Activated CD4-positive, alpha-beta T cell treated with anti-CD3 and anti-CD28 coated beads, Interleukin-2, amount 10 ng/mL, durations not matched to agents 24 days and 14 days (primary cell): ENCODE measurements at regions of chr1 and their contacts with region 1.

Region 1: GRCh38 chr1:156054500-156055280 is at the start of gene LAMTOR2:
- DNase-seq: peak; percentile 99
- H3K4me3 Mint-ChIP-seq: peak within 1 kb of the TSS; percentile 98
- H3K27ac Mint-ChIP-seq: peak within 1 kb of the TSS; percentile 89
- H3K4me1 Mint-ChIP-seq: peaks cover 30% of the 10 kb centered on the region
- H3K27me3 Mint-ChIP-seq: no peaks in the 10 kb centered on the region
- total RNA-seq, gene LAMTOR2: 69.9 and 73.0 TPM in 2 replicates

Region 2: DNA sequence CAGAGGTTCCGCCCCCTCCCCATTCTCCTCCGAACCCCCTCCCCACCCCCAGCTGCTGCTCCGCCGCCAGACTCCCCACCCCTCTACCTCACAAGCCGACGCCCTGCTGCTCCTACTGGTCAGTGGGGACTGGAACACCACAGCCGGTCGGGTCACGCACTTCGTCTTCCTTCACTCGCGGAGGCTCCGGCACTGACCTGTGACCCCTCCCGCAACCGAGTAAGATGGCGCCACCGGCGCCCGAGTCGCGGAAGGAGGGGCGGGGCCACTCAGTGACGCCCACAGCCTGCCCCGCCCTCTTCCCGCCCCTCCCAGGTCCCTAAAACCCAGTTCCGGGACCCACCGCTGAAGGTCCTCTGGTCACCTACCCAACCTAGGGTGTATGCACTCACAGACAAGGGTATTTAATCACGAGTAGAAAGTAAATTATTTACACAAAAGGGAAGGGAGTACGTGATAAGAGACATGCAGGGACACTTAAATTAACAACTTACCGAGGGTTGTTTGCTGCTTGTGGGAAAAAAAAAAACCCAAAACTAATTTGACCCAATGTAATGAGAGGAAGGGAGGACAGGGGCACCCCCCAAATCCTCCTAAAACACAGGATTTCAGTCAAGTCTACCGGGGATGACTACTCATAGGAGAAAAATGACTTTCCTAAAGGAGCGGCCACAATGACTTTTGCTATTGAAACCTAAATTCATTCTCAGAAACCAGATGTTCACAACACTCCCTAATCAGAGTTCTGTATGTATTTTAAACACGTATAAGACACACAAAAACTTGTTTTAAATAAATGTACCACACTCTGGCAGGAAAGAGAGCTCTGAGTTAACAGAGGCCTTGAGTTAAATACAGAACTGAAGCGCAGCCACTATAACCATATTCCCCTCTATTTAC is 143.3 kb before region 1 on chr1 and contains the start of gene RIT1:
- intact Hi-C with region 1: loop called (anchors 2 kb)
- DNase-seq: peak; percentile 95
- H3K4me3 Mint-ChIP-seq: peak within 1 kb of the TSS; percentile 97
- H3K27ac Mint-ChIP-seq: peak within 1 kb of the TSS; percentile 99
- H3K4me1 Mint-ChIP-seq: peaks cover 21% of the 10 kb centered on the region
- H3K27me3 Mint-ChIP-seq: no peaks in the 10 kb centered on the region
- total RNA-seq, gene RIT1: 17.9 and 21.7 TPM in 2 replicates

Region 3: GRCh38 chr1:155978325-155978972 is 76.2 kb before region 1 on chr1 and contains the start of gene ARHGEF2:
- intact Hi-C with region 1: loop called (anchors 2 kb)
- DNase-seq: peak; percentile 94
- H3K4me3 Mint-ChIP-seq: peak within 1 kb of the TSS; percentile 99
- H3K27ac Mint-ChIP-seq: peak within 1 kb of the TSS; percentile 92
- H3K4me1 Mint-ChIP-seq: peaks cover 70% of the 10 kb centered on the region
- H3K27me3 Mint-ChIP-seq: no peaks in the 10 kb centered on the region
- total RNA-seq, gene ARHGEF2: 189 and 198 TPM in 2 replicates

Region 4: DNA sequence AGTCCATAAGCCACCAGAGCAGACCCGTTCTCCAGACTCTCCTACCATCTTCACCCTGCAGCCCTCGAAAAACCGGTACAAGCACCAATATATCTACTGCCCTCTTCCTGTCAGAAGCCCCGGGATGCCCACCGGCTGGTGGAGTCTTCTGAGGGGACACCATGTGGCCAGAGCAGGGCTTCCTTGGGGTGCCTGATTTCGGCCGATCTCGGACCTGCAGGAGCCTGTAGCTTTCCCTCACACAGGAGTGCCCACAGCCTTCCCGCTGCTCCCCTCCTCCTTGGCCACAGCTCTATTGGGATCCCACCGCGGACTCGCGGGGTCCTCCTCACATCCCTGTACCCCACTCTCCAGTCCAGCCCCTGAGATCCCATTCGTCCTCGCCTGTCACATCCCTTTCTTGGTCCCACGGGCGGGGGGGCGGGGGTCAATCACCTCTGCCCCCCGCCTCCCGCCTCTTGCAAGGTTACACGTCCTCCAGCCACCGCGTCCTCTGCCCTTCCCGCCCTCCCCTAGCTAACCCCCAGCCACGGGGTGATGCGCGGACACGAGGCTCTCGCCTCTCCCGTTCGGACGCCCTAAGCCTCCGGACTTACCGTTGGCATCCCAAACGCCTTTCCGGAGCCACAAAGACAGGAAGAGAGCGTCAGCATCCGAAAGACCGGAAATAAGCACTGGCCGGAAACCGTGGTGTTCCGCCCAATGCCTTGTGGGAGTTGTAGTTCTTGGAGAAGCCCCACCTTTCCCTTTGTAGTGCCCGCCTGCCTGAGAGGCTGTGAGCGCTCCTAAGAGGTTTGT is 34.2 kb before region 1 on chr1 and contains the start of gene SSR2:
- intact Hi-C with region 1: loop called (anchors 1 kb)
- DNase-seq: peak; percentile 97
- H3K4me3 Mint-ChIP-seq: peak within 1 kb of the TSS; percentile 92
- H3K27ac Mint-ChIP-seq: peak within 1 kb of the TSS; percentile 93
- H3K4me1 Mint-ChIP-seq: peaks cover 27% of the 10 kb centered on the region
- H3K27me3 Mint-ChIP-seq: peaks cover 4% of the 10 kb centered on the region
- total RNA-seq, gene SSR2: 175 and 176 TPM in 2 replicates

Region 5: GRCh38 chr1:156193488-156194299 is 139.0 kb after region 1 on chr1 and contains the start of gene SLC25A44:
- intact Hi-C with region 1: loop called (anchors 1 kb)
- DNase-seq: peak; percentile 99
- H3K4me3 Mint-ChIP-seq: peak within 1 kb of the TSS; percentile 100
- H3K27ac Mint-ChIP-seq: peak within 1 kb of the TSS; percentile 97
- H3K4me1 Mint-ChIP-seq: peaks cover 52% of the 10 kb centered on the region
- H3K27me3 Mint-ChIP-seq: no peaks in the 10 kb centered on the region
- total RNA-seq, gene SLC25A44: 61.0 and 67.9 TPM in 2 replicates